Right cardiac atrium (tissue), 5 donors: ENCODE measurements at regions of chr2 and their contacts with region 1.

Region 1: DNA sequence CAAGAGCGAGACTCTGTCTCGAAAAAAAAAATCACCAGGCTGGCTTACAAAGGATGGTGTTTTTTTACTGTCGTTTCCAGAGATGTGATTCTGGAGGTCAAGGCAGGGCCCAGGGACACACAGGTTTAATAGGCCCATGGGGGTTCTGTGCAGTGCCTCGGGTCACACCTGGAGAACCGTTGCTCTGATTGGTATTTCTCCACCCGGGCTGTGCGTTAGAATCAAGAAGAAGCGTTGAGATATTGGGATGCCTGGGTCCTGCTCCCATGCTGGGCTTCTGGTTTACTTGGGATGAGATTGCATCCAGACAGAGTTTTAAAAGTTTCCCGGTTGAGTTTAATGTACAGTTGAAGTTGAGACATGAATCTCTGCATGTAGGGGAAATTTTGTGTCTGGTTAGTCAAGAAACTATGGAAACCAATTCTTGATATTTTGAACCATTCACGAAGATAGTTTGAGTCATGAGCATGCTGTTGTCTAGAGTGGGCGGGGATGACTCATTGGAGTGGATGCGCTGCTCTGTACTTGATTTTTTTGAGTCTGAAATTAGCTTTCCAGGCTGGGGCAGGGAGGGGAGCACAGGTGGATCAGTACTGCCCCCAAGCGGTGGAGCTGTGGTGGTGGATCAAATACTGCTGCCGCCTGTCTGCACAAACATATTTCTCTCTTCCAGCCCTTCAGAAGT is 50.1 kb downstream of the GREB1 start:
- DNase-seq: peak; percentile 52 to 78 (median 73)
- ATAC-seq: peak; percentile 57 to 80
- H3K4me3 ChIP-seq: no peak overlapping the region
- H3K27ac ChIP-seq: no peak overlapping the region
- H3K4me1 ChIP-seq: no peaks in the 10 kb centered on the region
- H3K27me3 ChIP-seq: no peaks in the 10 kb centered on the region

Region 2: GRCh38 chr2:11154923-11155380 is 429.0 kb before region 1 on chr2:
- intact Hi-C with region 1: loop called in 1 of 4 experiments (anchors 10 kb)
- DNase-seq: peak; percentile 98 to 100 (median 100)
- ATAC-seq: peak; percentile 93 to 95
- H3K4me3 ChIP-seq: peak overlapping the region; percentile 76
- H3K27ac ChIP-seq: peak overlapping the region; percentile 95
- H3K4me1 ChIP-seq: no peaks in the 10 kb centered on the region
- H3K27me3 ChIP-seq: no peaks in the 10 kb centered on the region

Region 3: GRCh38 chr2:11477994-11478393 is 106.0 kb before region 1 on chr2:
- intact Hi-C with region 1: loop called (anchors 1 to 5 kb)
- DNase-seq: peak; percentile 88 to 96 (median 90)
- ATAC-seq: peak; percentile 53 to 69
- H3K4me3 ChIP-seq: no peak overlapping the region
- H3K27ac ChIP-seq: no peak overlapping the region
- H3K4me1 ChIP-seq: no peaks in the 10 kb centered on the region
- H3K27me3 ChIP-seq: no peaks in the 10 kb centered on the region

Region 4: DNA sequence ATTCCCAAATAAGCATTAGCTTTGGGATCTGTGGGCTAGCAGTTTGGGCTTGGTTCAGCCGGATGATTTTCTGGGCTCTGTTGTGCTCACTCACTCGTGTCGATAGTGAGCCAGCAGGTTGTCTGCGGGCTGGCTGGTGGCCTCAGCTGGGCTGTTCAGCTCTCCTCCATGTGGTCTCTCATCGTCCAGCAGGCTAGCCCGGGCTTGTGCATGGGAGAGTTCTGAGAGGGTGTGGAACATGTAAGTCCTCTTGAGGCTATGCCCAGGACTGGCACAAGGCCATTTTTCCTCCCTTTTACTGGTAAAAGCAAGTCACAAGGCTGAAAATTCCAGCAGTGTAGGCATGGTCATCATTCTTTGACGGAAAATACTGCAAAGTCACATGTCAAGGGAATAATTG is 47.5 kb after region 1 on chr2:
- intact Hi-C with region 1: no loop called
- DNase-seq: no peak
- ATAC-seq: no peak
- H3K4me3 ChIP-seq: no peak overlapping the region
- H3K27ac ChIP-seq: no peak overlapping the region
- H3K4me1 ChIP-seq: no peaks in the 10 kb centered on the region
- H3K27me3 ChIP-seq: no peaks in the 10 kb centered on the region

Region 5: GRCh38 chr2:11778923-11779757 is 195.2 kb after region 1 on chr2:
- intact Hi-C with region 1: no loop called
- DNase-seq: peak; percentile 81 to 92 (median 91)
- ATAC-seq: peak; percentile 88 to 96
- H3K4me3 ChIP-seq: no peak overlapping the region
- H3K27ac ChIP-seq: no peak overlapping the region
- H3K4me1 ChIP-seq: no peaks in the 10 kb centered on the region
- H3K27me3 ChIP-seq: no peaks in the 10 kb centered on the region